HepG2 (cell line): ENCODE measurements at regions of chr10 and their contacts with region 1.

Region 1: GRCh38 chr10:11986593-11987216 is 55.9 kb downstream of the UPF2 start:
- DNase-seq: peak; percentile 83
- ATAC-seq: peak; percentile 87
- H3K4me3 ChIP-seq: peak overlapping the region in 1 of 3 experiments; percentile 29; a peak in 2 of 6 replicates
- H3K27ac ChIP-seq: peak overlapping the region; percentile 60
- H3K4me1 ChIP-seq: peaks cover 15% of the 10 kb centered on the region
- H3K27me3 ChIP-seq: no peaks in the 10 kb centered on the region
- CTCF ChIP-seq: peak; percentile 89
- EP300 ChIP-seq: peak in 1 of 2 experiments; percentile 31; a peak in 2 of 4 replicates
- POLR2A ChIP-seq: no peak
- RAD21 ChIP-seq: peak; percentile 88

Region 2: DNA sequence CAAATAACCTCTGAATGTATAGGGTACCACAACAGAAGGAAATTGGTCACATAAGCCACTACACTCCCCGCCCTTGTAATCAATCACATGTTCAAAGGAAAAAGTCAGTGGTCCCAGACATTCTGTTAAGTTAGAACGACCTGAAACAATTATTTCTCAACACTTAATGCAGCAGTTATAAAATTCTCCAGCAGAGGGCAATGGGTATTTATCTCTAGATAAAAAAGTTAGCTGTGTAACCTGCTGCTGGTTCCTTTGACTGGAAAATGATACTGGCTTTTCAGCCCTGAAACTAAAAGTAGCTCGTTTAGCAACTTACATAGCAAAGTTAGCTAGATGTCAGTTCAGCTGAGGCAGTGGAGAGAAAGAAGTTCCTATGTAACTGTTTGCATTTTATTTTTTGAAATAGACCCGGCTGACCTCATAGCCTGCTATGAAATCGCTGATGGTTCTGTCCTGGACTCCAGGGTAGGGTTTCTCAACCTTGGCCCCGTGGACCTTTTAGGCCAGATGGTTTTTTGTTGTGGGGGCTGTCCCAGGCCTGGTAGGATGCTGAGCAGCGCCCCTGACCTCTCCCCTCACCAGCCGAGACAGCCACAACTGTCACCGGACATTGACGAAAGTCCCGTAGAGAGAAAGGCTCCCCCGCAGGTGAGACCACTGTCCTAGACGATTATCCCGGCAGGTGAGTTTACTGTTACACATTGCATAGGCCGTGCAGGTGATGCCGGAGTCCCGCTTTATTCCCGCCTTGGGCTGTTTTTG is 203.7 kb before region 1 on chr10:
- CTCF ChIA-PET with region 1: interaction called, 21 read pairs
- POLR2A ChIA-PET with region 1: interaction called, 8 read pairs
- in situ Hi-C with region 1: no loop called
- intact Hi-C with region 1: loop called (anchors 1 kb)
- DNase-seq: peak; percentile 71
- ATAC-seq: peak; percentile 72
- H3K4me3 ChIP-seq: peak overlapping the region in 2 of 3 experiments; percentile 4 to 24; a peak in 3 of 6 replicates
- H3K27ac ChIP-seq: no peak overlapping the region
- H3K4me1 ChIP-seq: peaks cover 13% of the 10 kb centered on the region
- H3K27me3 ChIP-seq: peaks cover 0 to 13% of the 10 kb centered on the region in 2 experiments; a peak in 3 of 5 replicates
- CTCF ChIP-seq: peak; percentile 60
- EP300 ChIP-seq: no peak
- POLR2A ChIP-seq: no peak
- RAD21 ChIP-seq: peak; percentile 44

Region 3: DNA sequence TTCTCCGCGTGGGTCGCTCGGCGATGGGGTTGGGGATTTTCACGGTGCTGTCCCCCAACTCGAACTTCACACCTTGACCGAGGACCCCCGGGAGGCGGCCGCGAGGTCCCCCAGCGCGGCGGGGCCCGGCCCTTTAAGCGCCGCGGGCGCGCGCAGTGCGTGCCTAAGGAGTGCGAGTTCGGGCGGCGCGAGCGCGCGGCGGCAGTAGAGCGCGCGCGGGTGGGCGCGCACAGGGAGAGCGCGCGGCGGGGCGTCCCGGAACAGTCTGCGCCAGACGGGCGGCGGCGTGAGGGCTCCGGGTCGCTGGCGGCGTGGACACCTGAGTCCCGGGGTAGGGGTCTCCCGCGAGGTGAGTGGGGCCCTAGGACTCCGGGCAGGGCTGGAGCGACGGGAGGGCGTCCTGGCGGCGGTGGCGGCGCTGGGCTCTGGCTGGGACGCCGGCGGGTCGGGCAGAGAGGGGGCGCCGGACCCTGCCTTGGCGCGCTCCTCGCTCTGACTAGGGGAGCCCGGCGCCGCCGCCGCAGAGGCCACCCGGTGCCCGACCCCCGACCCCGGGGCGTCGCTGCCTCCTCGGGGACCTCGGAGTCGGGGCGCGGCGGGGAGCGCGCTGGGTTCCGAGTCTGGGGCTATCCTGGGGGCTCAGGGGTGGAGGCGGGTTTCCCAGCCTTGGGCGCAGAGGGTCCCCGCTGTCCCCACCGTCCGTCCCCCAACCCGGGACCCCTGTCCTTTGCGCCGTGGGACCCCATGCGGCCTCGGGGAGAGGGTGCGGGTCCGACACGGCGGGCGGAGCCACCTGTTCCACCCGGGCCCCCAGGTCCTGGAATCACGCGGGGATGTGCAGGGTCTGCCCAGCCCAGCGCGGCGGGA is 163.3 kb before region 1 on chr10 and contains the start of gene PROSER2:
- CTCF ChIA-PET with region 1: interaction called, 3 read pairs
- POLR2A ChIA-PET with region 1: no interaction called
- in situ Hi-C with region 1: no loop called
- intact Hi-C with region 1: loop called (anchors 2 kb)
- DNase-seq: no peak
- ATAC-seq: peak; percentile 89
- H3K4me3 ChIP-seq: peak within 1 kb of the TSS; percentile 90 to 98 (median 97)
- H3K27ac ChIP-seq: peak within 1 kb of the TSS; percentile 53
- H3K4me1 ChIP-seq: peaks cover 55% of the 10 kb centered on the region
- H3K27me3 ChIP-seq: no peaks in the 10 kb centered on the region
- CTCF ChIP-seq: no peak; the same call in 1 of the 2 replicates
- EP300 ChIP-seq: no peak
- POLR2A ChIP-seq: peak; percentile 38 to 83; a peak in 3 of 4 replicates
- RAD21 ChIP-seq: no peak; the same call in none of the 2 replicates
- total RNA-seq, gene PROSER2: 6.7 and 6.9 TPM in 2 replicates

Region 4: DNA sequence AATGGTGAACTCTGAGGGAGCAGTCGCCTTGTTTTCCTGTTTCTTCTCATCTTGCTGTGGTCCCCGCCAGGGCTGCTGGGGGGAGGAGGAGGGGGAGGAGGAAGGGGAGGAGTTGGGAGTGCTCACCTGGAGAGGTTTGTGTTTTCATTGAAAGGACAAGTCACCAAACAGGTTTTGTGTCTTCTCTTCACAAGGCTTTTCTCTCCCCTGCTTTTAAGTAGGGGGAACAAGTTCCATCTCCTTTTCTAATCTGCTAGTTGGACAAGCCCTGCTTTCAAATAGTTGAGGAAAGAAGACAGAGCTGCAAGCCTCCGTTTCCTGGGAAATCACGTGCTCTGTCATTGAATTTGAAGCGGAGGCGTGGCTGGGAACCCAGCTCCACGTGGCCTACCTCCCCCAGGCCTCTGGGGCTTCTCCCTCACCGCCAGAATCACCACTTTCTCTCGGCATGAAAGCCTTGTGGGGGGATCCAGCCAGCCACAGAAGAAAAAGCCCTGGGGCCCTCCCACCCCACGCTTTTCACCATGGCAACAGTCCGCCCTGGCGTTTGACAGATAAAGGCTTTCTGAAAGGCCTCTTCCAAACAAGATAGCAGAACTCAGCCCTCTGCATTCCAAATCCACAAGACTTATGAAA is 112.0 kb before region 1 on chr10:
- CTCF ChIA-PET with region 1: no interaction called
- POLR2A ChIA-PET with region 1: interaction called, 5 read pairs
- in situ Hi-C with region 1: no loop called
- intact Hi-C with region 1: loop called (anchors 1 kb)
- DNase-seq: peak; percentile 80
- ATAC-seq: peak; percentile 48
- H3K4me3 ChIP-seq: peak overlapping the region; percentile 49 to 69 (median 49); a peak in 5 of 6 replicates
- H3K27ac ChIP-seq: peak overlapping the region; percentile 94
- H3K4me1 ChIP-seq: peaks cover 66% of the 10 kb centered on the region
- H3K27me3 ChIP-seq: no peaks in the 10 kb centered on the region
- CTCF ChIP-seq: no peak
- EP300 ChIP-seq: no peak
- POLR2A ChIP-seq: 0 out of 4 replicates have a peak, but pooled peaks of 1 of the 2 experiments have one; percentile 2
- RAD21 ChIP-seq: no peak

Region 5: GRCh38 chr10:11881477-11882417 is 105.0 kb before region 1 on chr10:
- CTCF ChIA-PET with region 1: interaction called, 4 read pairs
- POLR2A ChIA-PET with region 1: no interaction called
- in situ Hi-C with region 1: no loop called
- intact Hi-C with region 1: loop called (anchors 1 kb)
- DNase-seq: peak; percentile 89
- ATAC-seq: peak; percentile 91
- H3K4me3 ChIP-seq: no peak overlapping the region
- H3K27ac ChIP-seq: no peak overlapping the region
- H3K4me1 ChIP-seq: peaks cover 69% of the 10 kb centered on the region
- H3K27me3 ChIP-seq: no peaks in the 10 kb centered on the region
- CTCF ChIP-seq: peak; percentile 85
- EP300 ChIP-seq: no peak
- POLR2A ChIP-seq: no peak
- RAD21 ChIP-seq: peak; percentile 85

Region 6: GRCh38 chr10:11918384-11918783 is 68.3 kb before region 1 on chr10:
- CTCF ChIA-PET with region 1: no interaction called
- POLR2A ChIA-PET with region 1: no interaction called
- in situ Hi-C with region 1: no loop called
- intact Hi-C with region 1: loop called (anchors 5 kb)
- DNase-seq: no peak
- ATAC-seq: peak; percentile 24; the same call in 1 of the 3 replicates
- H3K4me3 ChIP-seq: no peak overlapping the region
- H3K27ac ChIP-seq: no peak overlapping the region
- H3K4me1 ChIP-seq: peaks cover 22% of the 10 kb centered on the region
- H3K27me3 ChIP-seq: no peaks in the 10 kb centered on the region
- CTCF ChIP-seq: no peak
- EP300 ChIP-seq: no peak
- POLR2A ChIP-seq: no peak
- RAD21 ChIP-seq: no peak

Region 7: DNA sequence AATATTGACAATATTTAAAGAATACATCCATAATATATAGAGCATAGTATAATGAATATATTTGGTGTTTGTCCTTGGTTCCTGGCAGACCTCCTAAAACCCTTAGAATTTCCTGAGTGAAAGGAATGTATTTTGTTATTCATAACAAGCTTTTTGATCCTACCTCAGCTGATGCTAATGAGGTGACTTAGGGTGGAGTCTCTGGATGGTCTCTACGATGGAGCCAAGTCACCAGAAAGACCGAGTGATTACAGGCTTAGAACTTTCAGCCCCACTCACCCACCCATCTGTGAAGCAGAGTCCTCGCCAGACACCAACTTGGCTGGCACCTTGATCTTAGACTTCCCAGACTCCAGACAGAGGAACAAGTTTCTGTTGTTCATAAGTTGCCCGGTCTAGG is 20.0 kb after region 1 on chr10:
- CTCF ChIA-PET with region 1: no interaction called
- POLR2A ChIA-PET with region 1: no interaction called
- in situ Hi-C with region 1: no loop called
- intact Hi-C with region 1: no loop called
- DNase-seq: no peak
- ATAC-seq: no peak
- H3K4me3 ChIP-seq: no peak overlapping the region
- H3K27ac ChIP-seq: no peak overlapping the region
- H3K4me1 ChIP-seq: no peaks in the 10 kb centered on the region
- H3K27me3 ChIP-seq: no peaks in the 10 kb centered on the region
- CTCF ChIP-seq: no peak
- EP300 ChIP-seq: no peak
- POLR2A ChIP-seq: no peak
- RAD21 ChIP-seq: no peak

Region 8: GRCh38 chr10:12048547-12048946 is 61.8 kb after region 1 on chr10:
- CTCF ChIA-PET with region 1: no interaction called
- POLR2A ChIA-PET with region 1: no interaction called
- in situ Hi-C with region 1: no loop called
- intact Hi-C with region 1: no loop called
- DNase-seq: no peak
- ATAC-seq: no peak
- H3K4me3 ChIP-seq: no peak overlapping the region
- H3K27ac ChIP-seq: no peak overlapping the region
- H3K4me1 ChIP-seq: peaks cover 39% of the 10 kb centered on the region
- H3K27me3 ChIP-seq: no peaks in the 10 kb centered on the region
- CTCF ChIP-seq: no peak
- EP300 ChIP-seq: no peak
- POLR2A ChIP-seq: no peak
- RAD21 ChIP-seq: no peak

Region 9: DNA sequence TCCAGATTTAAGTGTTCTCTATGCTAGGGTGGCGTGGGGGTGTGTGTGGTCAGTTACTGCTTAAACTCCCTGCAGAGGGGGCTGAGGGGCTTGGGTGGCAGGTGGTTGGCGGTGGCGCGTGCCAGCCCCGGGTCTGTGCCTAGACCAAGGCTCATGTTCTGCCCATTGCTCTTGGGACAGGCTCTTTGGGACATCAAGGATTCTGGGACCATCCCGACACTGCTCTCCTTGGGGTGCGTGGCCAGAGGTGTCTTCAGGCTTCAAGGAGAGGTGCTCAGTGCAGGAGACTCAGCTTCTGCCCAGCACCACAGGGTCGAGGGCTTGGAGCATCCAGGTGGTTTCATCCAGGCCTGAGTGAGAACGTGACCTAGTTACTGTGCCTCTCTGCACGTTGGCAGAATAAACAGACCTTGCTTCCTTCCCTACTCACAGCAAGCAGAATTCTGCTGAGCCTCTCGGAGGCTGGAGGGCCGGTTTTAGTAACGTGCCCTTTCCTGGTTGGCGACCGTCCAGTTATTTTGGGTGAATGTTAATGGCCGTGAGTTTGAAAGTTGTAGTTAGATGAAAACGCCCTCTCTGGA is 402.5 kb after region 1 on chr10:
- CTCF ChIA-PET with region 1: no interaction called
- POLR2A ChIA-PET with region 1: no interaction called
- in situ Hi-C with region 1: no loop called
- intact Hi-C with region 1: no loop called
- DNase-seq: no peak
- ATAC-seq: no peak
- H3K4me3 ChIP-seq: no peak overlapping the region
- H3K27ac ChIP-seq: no peak overlapping the region
- H3K4me1 ChIP-seq: no peaks in the 10 kb centered on the region
- H3K27me3 ChIP-seq: peaks cover 0 to 13% of the 10 kb centered on the region in 2 experiments; a peak in 2 of 5 replicates
- CTCF ChIP-seq: no peak
- EP300 ChIP-seq: no peak
- POLR2A ChIP-seq: no peak
- RAD21 ChIP-seq: no peak